Thyroid gland (tissue), 4 donors: ENCODE measurements at regions of chr1 and their contacts with region 1.

Region 1: DNA sequence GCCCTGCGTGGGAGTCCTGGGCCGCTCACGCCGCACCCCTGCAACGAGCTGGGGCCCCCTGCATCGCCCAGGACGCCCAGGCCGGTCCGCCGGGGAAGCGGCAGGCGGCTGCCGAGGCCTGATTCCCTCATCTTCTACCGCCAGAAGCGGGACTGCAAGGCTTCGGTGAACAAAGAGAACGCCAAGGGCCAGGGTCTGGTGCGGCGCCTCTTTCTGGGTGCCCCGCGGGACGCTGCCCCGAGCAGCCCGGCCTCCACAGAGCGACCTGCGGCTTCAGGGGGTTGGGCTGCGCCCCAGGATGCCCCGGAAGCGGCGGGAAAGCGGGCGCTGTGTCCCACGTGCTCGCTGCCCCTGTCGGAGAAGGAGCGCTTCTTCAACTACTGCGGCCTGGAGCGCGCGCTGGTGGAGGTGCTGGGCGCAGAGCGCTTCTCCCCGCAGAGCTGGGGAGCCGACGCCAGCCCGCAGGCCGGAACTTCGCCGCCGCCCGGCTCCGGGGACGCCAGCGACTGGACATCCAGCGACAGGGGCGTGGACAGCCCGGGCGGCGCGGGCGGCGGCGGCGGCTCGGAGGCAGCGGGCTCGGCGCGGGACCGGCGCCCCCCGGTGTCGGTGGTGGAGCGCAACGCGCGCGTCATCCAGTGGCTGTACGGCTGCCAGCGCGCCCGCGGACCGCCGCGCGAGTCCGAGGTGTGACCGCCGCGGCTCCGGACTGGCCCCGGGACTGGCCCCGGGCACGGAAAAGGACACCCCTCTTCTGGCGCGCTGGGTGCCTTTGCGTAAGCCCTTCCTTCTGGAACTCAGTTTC is 2.7 kb downstream of the FAM110D start:
- DNase-seq: peak; percentile 66 to 68
- H3K4me3 ChIP-seq: peak overlapping the region in 2 of 3 donors; percentile 25 to 49
- H3K27ac ChIP-seq: peak overlapping the region in 2 of 3 donors; percentile 36 to 45
- H3K4me1 ChIP-seq: peaks cover 13 to 17% of the 10 kb centered on the region in 2 donors
- H3K27me3 ChIP-seq: no peaks in the 10 kb centered on the region
- CTCF ChIP-seq: peak in 2 of 6 experiments; percentile 39 to 41
- POLR2A ChIP-seq: no peak

Region 2: GRCh38 chr1:25895365-25895993 is 266.1 kb before region 1 on chr1:
- intact Hi-C with region 1: loop called (anchors 10 kb)
- DNase-seq: peak; percentile 87 to 90
- H3K4me3 ChIP-seq: no peak overlapping the region
- H3K27ac ChIP-seq: no peak overlapping the region
- H3K4me1 ChIP-seq: peaks cover 0 to 3% of the 10 kb centered on the region in 2 donors
- H3K27me3 ChIP-seq: no peaks in the 10 kb centered on the region
- CTCF ChIP-seq: peak; percentile 91 to 99 (median 96)
- POLR2A ChIP-seq: no peak

Region 3: DNA sequence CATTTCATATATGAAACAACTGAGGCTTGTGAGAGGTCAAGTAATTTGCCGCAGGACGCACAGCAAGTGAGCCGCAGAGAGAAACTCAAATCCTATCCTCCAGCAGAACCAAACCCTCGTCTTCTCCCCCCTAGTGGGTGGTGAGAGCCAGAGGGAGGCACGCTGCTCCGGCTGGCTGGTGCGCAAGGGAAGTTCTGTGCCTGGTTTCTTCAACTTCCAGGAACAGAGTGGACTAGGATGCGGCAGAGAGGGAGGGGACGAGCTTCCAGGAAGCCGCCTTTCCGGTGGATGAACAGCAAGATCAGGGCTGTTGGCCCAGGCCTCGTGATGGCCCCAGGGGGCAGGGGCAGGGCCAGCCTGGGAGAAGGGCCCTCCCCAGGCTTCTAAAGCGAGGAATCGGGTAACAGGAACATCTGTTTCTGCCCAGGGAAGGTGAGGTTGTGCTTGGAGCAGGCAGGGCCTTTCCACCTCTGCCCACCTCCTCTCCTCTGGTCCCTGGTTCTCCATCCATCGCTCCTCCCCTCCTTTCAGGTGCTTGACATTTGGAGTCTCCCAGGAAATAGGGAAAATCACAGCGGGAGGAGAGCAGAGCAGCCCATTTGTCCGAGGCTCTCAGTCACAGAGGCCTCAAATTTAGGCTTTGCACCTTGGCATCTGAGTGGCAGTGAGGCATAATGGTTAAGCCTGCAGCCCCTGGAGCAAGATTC is 66.8 kb before region 1 on chr1:
- intact Hi-C with region 1: no loop called
- DNase-seq: peak; percentile 26 to 55
- H3K4me3 ChIP-seq: no peak overlapping the region
- H3K27ac ChIP-seq: peak overlapping the region in 2 of 3 donors; percentile 33 to 35
- H3K4me1 ChIP-seq: peaks cover 0 to 14% of the 10 kb centered on the region in 2 donors
- H3K27me3 ChIP-seq: no peaks in the 10 kb centered on the region
- CTCF ChIP-seq: no peak
- POLR2A ChIP-seq: no peak

Region 4: DNA sequence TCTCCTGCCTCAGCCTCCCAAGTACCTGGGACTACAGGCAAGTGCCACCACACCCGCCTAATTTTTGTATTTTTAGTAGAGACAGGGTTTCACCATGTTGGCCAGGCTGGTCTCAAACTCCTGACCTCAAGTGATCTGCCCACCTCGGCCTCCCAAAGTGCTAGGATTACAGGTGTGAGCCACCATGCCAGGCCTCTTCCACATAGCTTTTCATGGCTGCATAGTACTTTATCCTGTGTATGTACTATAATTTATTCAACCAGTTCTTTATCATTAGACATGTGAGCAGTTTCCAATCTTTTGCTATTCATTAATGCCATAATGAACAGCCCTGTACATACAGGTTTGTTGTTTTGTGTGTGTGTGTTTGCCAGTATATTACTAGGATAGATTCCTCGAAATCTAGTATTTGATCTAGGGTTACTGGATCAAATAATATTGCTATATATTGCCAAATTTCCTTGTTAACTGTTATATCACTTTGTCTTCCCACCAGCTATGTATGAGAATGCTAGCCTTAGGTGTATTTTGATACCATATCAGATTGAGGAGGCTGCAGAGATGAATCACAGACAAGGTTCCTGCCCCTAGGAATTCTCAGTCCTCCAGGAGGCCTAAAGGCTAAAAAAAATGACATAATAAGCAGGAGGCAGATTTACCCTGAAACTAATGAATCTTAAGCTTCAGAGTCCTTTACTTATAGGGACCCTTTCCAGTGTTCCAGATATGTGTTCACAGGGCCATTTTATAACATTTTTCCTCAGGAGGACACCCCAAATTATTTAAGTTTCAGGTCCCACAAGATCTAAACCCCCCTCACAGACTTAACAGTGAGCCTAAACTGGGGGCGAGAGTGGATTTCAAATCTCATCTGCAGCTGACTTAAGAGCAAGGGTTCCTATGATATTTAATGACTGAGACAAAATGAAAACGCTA is 52.1 kb before region 1 on chr1:
- intact Hi-C with region 1: loop called (anchors 5 kb)
- DNase-seq: no peak
- H3K4me3 ChIP-seq: no peak overlapping the region
- H3K27ac ChIP-seq: no peak overlapping the region
- H3K4me1 ChIP-seq: peaks cover 23 to 28% of the 10 kb centered on the region in 2 donors
- H3K27me3 ChIP-seq: no peaks in the 10 kb centered on the region
- CTCF ChIP-seq: no peak
- POLR2A ChIP-seq: no peak